ENCODE measurements at regions of chr1 and their contacts with region 1.

Region 1: GRCh38 chr1:19448491-19449439 is 36.6 kb downstream of the CAPZB start:
- DNase-seq: peak in 1 of 2 donors; percentile 88
- ATAC-seq: peak; percentile 47
- H3K4me3 ChIP-seq: no peak overlapping the region
- H3K27ac ChIP-seq: peak overlapping the region; percentile 62 to 91
- H3K4me1 ChIP-seq: peaks cover 3 to 12% of the 10 kb centered on the region in 2 donors
- H3K27me3 ChIP-seq: no peaks in the 10 kb centered on the region

Region 2: DNA sequence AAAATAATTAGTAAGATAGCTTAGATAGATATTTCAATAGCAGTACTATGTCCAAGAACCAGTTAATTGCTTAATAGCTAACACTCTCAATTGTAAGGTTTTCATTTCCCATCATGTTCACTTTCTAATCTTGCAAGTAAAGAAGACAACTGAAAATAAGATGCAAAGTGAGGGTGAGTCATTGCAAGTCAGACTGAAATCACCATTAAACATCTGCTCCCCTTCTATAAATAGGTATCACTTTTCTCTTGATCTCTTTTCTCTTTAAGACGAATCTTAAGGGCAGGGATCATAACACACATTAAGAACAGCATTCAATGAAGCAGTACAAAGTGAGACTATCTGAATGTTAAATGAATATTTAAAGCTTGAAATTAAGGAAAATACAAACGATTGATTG is 279.1 kb before region 1 on chr1:
- intact Hi-C with region 1: no loop called
- DNase-seq: no peak
- ATAC-seq: no peak
- H3K4me3 ChIP-seq: no peak overlapping the region
- H3K27ac ChIP-seq: no peak overlapping the region
- H3K4me1 ChIP-seq: no peaks in the 10 kb centered on the region
- H3K27me3 ChIP-seq: no peaks in the 10 kb centered on the region

Region 3: GRCh38 chr1:19414515-19415121 is 34.1 kb before region 1 on chr1:
- intact Hi-C with region 1: loop called in 1 of 2 experiments (anchors 5 kb)
- DNase-seq: peak in 1 of 2 donors; percentile 61
- ATAC-seq: peak; percentile 81
- H3K4me3 ChIP-seq: no peak overlapping the region
- H3K27ac ChIP-seq: peak overlapping the region; percentile 72 to 82
- H3K4me1 ChIP-seq: peaks cover 3 to 8% of the 10 kb centered on the region in 2 donors
- H3K27me3 ChIP-seq: no peaks in the 10 kb centered on the region

Measured in aorta (tissue), 5 donors.